Activated naive CD4-positive, alpha-beta T cell treated with anti-CD3 and anti-CD28 coated beads for 36 hours (primary cell): ENCODE measurements at regions of chr4 and their contacts with region 1.

Region 1: GRCh38 chr4:106340774-106341173 is 24.4 kb downstream of the AIMP1 start:
- DNase-seq: no peak
- H3K4me3 Mint-ChIP-seq: no peak overlapping the region
- H3K27ac Mint-ChIP-seq: no peak overlapping the region
- H3K4me1 Mint-ChIP-seq: peaks cover 45% of the 10 kb centered on the region
- H3K27me3 Mint-ChIP-seq: no peaks in the 10 kb centered on the region

Region 2: DNA sequence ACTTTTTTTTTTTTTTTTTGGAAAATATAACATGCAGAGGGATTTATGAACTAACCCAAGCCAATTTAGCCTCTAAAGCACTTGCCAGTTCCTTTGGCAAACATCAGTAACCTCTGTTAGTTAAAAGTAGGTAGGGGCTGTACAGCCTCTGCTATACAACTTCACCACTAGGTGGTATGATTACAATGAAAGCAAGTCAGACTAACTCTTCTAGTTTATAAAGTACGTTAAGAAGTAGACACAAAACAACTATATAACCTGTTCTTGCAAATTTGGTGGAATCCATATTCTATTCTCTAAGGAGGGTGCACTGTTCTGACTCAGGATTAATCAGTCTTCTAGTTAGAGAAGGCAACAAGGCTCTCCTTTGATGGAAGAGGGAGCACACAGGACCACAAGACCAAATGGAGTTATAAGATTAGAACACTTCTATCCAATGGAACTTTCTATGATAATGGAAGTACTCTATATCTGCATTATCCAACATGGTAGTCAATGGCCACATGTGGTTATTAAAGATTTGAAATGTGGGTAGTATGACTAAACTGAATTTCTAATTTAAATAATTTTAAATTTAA is 11.6 kb before region 1 on chr4:
- CTCF ChIA-PET with region 1: no interaction called
- intact Hi-C with region 1: loop called (anchors 2 kb)
- DNase-seq: no peak
- H3K4me3 Mint-ChIP-seq: no peak overlapping the region
- H3K27ac Mint-ChIP-seq: no peak overlapping the region
- H3K4me1 Mint-ChIP-seq: peaks cover 7% of the 10 kb centered on the region
- H3K27me3 Mint-ChIP-seq: no peaks in the 10 kb centered on the region

Region 3: DNA sequence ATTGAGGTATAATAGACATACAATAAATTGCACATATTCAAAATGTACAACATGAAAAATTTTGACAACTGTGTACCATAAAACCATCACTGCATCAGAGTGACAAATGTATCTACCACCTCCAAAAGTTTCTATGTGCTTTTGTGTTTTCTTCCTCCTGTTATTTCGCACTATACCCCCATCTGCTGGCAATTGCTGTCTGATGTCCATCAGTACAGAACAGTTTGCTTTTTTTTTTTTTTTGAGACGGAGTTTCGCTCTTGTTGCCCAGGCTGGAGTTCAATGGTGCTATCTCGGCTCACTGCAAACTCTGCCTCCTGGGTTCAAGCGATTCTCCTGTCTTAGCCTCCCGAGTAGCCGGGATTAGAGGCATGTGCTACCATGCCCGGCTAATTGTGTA is 182.1 kb after region 1 on chr4:
- CTCF ChIA-PET with region 1: no interaction called
- intact Hi-C with region 1: no loop called
- DNase-seq: no peak
- H3K4me3 Mint-ChIP-seq: no peak overlapping the region
- H3K27ac Mint-ChIP-seq: no peak overlapping the region
- H3K4me1 Mint-ChIP-seq: no peaks in the 10 kb centered on the region
- H3K27me3 Mint-ChIP-seq: peaks cover 3% of the 10 kb centered on the region